Activated T-helper 1 cell treated with anti-CD3 and anti-CD28 coated beads, Interleukin-12 subunit alpha, Interleukin-12 subunit beta, Interleukin-2, Interleukin-4 antibody, amounts not matched to agents 30 ng/mL and 10 ng/mL and 1 ng/mL, durations not matched to agents 14 hours and 24 hours and 36 hours (primary cell): ENCODE measurements at regions of chr5 and their contacts with region 1.

Region 1: GRCh38 chr5:87121304-87122150 is 146.2 kb upstream of the RASA1 start:
- DNase-seq: peak; percentile 17
- H3K4me3 Mint-ChIP-seq: peak overlapping the region; percentile 40
- H3K27ac Mint-ChIP-seq: peak overlapping the region; percentile 73
- H3K4me1 Mint-ChIP-seq: peaks cover 59% of the 10 kb centered on the region
- H3K27me3 Mint-ChIP-seq: no peaks in the 10 kb centered on the region

Region 2: GRCh38 chr5:86617756-86618576 is 503.6 kb before region 1 on chr5 and contains the start of gene COX7C:
- intact Hi-C with region 1: loop called (anchors 1 kb)
- DNase-seq: peak; percentile 90
- H3K4me3 Mint-ChIP-seq: peak within 1 kb of the TSS; percentile 98
- H3K27ac Mint-ChIP-seq: peak within 1 kb of the TSS; percentile 95
- H3K4me1 Mint-ChIP-seq: peaks cover 16% of the 10 kb centered on the region
- H3K27me3 Mint-ChIP-seq: peaks cover 7% of the 10 kb centered on the region
- total RNA-seq, gene COX7C: 436 and 471 TPM in 2 replicates

Region 3: DNA sequence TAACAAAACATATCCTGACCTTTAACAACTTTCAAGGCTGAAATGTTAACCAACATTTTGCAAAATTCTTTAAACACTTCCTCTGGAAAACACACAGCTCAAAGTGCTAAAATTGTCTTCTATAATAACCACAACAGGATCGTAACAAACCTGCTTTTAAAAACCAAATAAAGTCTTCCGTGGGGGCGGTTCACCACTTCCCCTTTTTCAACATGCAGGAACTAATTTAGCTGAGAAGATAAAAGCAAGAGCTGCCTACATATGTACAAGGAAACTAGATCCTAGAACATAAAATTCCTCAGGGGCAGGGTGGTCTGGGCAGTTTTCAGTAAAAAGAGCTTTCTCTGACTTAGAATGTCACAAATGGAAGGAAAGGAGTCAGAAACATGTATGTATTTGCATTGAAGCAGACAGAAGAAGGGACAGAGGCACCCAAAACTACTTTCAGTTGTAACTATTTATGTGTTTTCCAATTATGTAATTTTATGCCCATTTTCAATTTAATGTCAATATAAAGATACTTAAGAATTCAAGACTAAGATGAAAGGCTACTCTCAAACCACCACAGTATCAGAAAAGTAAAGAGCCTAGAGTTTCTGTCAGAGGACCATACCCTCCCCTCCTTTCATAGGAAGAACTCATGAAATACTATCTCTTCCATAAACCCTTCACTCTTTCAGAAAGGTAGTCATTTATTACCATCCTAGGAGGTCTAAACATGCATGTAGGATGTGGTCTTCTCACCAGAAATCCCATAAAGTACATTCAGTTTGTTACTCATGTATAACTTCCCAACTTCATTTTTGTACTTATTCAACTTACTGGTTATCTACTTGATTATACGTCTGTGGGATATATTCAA is 39.8 kb before region 1 on chr5:
- intact Hi-C with region 1: loop called (anchors 1 kb)
- DNase-seq: peak; percentile 41
- H3K4me3 Mint-ChIP-seq: peak overlapping the region; percentile 65
- H3K27ac Mint-ChIP-seq: peak overlapping the region; percentile 73
- H3K4me1 Mint-ChIP-seq: peaks cover 55% of the 10 kb centered on the region
- H3K27me3 Mint-ChIP-seq: no peaks in the 10 kb centered on the region

Region 4: GRCh38 chr5:87195104-87195591 is 73.6 kb after region 1 on chr5:
- intact Hi-C with region 1: loop called (anchors 2 kb)
- DNase-seq: no peak
- H3K4me3 Mint-ChIP-seq: no peak overlapping the region
- H3K27ac Mint-ChIP-seq: no peak overlapping the region
- H3K4me1 Mint-ChIP-seq: peaks cover 26% of the 10 kb centered on the region
- H3K27me3 Mint-ChIP-seq: no peaks in the 10 kb centered on the region

Region 5: GRCh38 chr5:87282269-87282668 is 160.7 kb after region 1 on chr5:
- intact Hi-C with region 1: loop called (anchors 5 kb)
- DNase-seq: no peak
- H3K4me3 Mint-ChIP-seq: peak overlapping the region; percentile 25
- H3K27ac Mint-ChIP-seq: peak overlapping the region; percentile 21
- H3K4me1 Mint-ChIP-seq: peaks cover 50% of the 10 kb centered on the region
- H3K27me3 Mint-ChIP-seq: no peaks in the 10 kb centered on the region

Region 6: DNA sequence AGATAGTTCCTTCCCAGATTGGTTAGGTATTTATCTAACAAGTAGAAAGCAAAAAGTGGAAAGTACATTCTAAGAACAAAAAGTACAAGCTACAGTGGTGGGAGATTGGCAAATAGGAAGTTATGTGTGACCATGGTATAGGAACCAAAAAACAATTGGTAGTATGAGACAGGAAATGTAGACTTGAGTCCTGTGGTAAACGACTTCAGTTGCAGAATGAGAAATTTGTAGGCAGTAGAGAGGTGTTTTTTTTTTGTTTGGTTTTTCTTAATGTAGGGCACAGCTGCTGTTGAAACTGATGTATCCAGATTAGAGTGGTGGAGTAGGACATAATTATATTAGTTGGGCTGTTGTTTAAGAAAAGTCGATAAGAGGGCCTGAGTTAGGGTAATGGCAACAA is 219.2 kb after region 1 on chr5:
- intact Hi-C with region 1: loop called (anchors 1 kb)
- DNase-seq: no peak
- H3K4me3 Mint-ChIP-seq: peak overlapping the region; percentile 70
- H3K27ac Mint-ChIP-seq: peak overlapping the region; percentile 86
- H3K4me1 Mint-ChIP-seq: peaks cover 32% of the 10 kb centered on the region
- H3K27me3 Mint-ChIP-seq: no peaks in the 10 kb centered on the region